CD4-positive, alpha-beta memory T cell (primary cell): ENCODE measurements at regions of chr7 and their contacts with region 1.

Region 1: GRCh38 chr7:74183613-74184450 is 9.7 kb downstream of the EIF4H start:
- DNase-seq: no peak
- H3K4me3 ChIP-seq: no peak overlapping the region
- H3K4me3 Mint-ChIP-seq: peak overlapping the region in 7 of 8 donors; percentile 2 to 74 (median 15)
- H3K27ac ChIP-seq: no peak overlapping the region
- H3K27ac Mint-ChIP-seq: peak overlapping the region in 6 of 7 donors; percentile 5 to 89 (median 66)
- H3K4me1 ChIP-seq: peaks cover 82% of the 10 kb centered on the region
- H3K4me1 Mint-ChIP-seq: peaks cover 60 to 98% (median 78%) of the 10 kb centered on the region in 4 donors
- H3K27me3 ChIP-seq: no peaks in the 10 kb centered on the region
- H3K27me3 Mint-ChIP-seq: no peaks in the 10 kb centered on the region

Region 2: DNA sequence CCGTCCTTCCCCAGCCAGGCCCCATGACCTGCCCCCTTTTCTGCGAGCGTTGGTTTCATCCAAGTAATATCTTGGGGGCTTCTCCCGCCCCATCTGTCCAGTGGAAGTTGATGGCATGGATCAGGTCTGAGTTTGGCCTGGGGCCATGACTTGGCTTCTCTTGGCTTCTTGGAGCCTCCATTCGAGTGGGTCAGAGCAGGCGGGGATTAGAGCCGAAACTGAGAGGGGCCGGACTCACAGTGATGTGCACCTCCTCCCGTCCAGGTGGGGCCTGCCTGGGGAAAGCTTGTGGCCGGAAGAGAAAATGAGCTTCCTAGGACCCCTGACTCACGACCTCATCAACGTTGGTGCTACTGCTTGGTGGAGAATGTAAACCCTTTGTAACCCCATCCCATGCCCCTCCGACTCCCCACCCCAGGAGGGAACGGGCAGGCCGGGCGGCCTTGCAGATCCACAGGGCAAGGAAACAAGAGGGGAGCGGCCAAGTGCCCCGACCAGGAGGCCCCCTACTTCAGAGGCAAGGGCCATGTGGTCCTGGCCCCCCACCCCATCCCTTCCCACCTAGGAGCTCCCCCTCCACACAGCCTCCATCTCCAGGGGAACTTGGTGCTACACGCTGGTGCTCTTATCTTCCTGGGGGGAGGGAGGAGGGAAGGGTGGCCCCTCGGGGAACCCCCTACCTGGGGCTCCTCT is 115.3 kb before region 1 on chr7:
- CTCF ChIA-PET with region 1: interaction called, 16 read pairs
- POLR2A ChIA-PET with region 1: no interaction called
- intact Hi-C with region 1: loop called (anchors 1 kb)
- DNase-seq: no peak
- H3K4me3 ChIP-seq: no peak overlapping the region
- H3K4me3 Mint-ChIP-seq: no peak overlapping the region
- H3K27ac ChIP-seq: no peak overlapping the region
- H3K27ac Mint-ChIP-seq: peak overlapping the region in 1 of 7 donors; percentile 55
- H3K4me1 ChIP-seq: no peaks in the 10 kb centered on the region
- H3K4me1 Mint-ChIP-seq: peaks cover 0 to under 1% (median 0%) of the 10 kb centered on the region in 4 donors
- H3K27me3 ChIP-seq: no peaks in the 10 kb centered on the region
- H3K27me3 Mint-ChIP-seq: no peaks in the 10 kb centered on the region

Region 3: DNA sequence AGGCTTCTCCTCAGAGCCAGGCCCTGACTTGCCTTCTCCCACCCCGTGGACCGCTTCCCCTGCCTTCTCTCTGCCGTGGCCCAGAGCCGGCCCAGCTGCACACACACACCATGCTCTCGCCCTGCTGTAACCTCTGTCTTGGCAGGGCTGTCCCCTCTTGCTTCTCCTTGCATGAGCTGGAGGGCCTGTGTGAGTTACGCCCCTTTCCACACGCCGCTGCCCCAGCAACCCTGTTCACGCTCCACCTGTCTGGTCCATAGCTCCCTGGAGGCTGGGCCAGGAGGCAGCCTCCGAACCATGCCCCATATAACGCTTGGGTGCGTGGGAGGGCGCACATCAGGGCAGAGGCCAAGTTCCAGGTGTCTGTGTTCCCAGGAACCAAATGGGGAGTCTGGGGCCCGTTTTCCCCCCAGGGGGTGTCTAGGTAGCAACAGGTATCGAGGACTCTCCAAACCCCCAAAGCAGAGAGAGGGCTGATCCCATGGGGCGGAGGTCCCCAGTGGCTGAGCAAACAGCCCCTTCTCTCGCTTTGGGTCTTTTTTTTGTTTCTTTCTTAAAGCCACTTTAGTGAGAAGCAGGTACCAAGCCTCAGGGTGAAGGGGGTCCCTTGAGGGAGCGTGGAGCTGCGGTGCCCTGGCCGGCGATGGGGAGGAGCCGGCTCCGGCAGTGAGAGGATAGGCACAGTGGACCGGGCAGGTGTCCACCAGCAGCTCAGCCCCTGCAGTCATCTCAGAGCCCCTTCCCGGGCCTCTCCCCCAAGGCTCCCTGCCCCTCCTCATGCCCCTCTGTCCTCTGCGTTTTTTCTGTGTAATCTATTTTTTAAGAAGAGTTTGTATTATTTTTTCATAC is 62.2 kb before region 1 on chr7:
- CTCF ChIA-PET with region 1: no interaction called
- POLR2A ChIA-PET with region 1: no interaction called
- intact Hi-C with region 1: no loop called
- DNase-seq: no peak
- H3K4me3 ChIP-seq: no peak overlapping the region
- H3K4me3 Mint-ChIP-seq: no peak overlapping the region
- H3K27ac ChIP-seq: no peak overlapping the region
- H3K27ac Mint-ChIP-seq: peak overlapping the region in 1 of 7 donors; percentile 72
- H3K4me1 ChIP-seq: no peaks in the 10 kb centered on the region
- H3K4me1 Mint-ChIP-seq: no peaks in the 10 kb centered on the region
- H3K27me3 ChIP-seq: no peaks in the 10 kb centered on the region
- H3K27me3 Mint-ChIP-seq: no peaks in the 10 kb centered on the region